Calu3 (cell line): ENCODE measurements at regions of chr22 and their contacts with region 1.

Region 1: DNA sequence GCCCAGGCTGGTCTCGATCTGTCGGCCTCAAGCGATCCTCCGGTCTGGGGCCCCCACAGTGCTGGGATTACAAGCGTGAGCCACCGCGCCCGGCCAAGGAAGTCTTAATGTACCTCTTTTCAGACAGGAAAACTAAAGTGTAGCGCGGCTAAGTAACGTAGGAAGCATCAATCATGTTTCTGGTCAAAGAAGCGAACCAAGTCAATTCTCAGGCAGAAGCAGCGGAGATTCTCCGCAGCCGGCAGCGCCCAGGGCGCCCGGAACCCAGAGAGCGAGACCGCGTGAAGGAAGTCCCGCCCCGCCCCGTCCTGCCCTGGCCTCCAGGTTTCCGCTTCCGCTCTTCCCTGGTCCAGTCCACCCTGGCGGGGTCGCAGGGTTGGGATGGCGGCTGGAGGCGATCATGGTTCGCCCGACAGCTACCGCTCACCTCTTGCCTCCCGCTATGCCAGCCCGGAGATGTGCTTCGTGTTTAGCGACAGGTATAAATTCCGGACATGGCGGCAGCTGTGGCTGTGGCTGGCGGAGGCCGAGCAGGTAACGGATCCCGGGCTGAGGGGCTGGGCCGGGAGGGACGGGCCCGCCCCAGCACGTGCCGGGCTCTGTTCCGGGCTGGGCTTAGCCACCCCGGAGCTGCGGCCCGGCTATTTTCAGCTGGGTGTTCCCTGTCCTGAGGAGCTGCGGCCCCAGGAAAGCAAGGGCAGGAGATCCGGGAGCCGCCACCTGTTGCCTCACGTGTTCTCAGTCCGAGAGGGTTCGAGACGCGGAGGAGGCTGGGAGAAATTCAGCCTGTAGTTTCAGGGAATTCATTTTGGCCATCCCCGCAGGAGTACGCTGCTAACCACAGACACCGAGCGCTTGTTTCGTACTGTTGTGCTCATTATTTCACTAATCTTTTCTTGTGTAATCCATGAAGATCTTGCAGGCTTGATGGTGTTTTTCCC is at the start of gene ADSL:
- DNase-seq: peak; percentile 93
- H3K4me3 Mint-ChIP-seq: peak within 1 kb of the TSS; percentile 88
- H3K27ac Mint-ChIP-seq: peak within 1 kb of the TSS; percentile 92
- H3K4me1 Mint-ChIP-seq: peaks cover 27% of the 10 kb centered on the region
- H3K27me3 Mint-ChIP-seq: no peaks in the 10 kb centered on the region
- CTCF ChIP-seq: no peak
- total RNA-seq, gene ADSL: 89.0 and 96.3 TPM in 2 replicates

Region 2: GRCh38 chr22:40044102-40044869 is 302.2 kb before region 1 on chr22:
- CTCF ChIA-PET with region 1: interaction called, 4 read pairs
- intact Hi-C with region 1: loop called (anchors 2 kb)
- DNase-seq: peak; percentile 97
- H3K4me3 Mint-ChIP-seq: peak overlapping the region; percentile 83
- H3K27ac Mint-ChIP-seq: peak overlapping the region; percentile 99
- H3K4me1 Mint-ChIP-seq: peaks cover 8% of the 10 kb centered on the region
- H3K27me3 Mint-ChIP-seq: peaks cover 11% of the 10 kb centered on the region
- CTCF ChIP-seq: no peak

Region 3: GRCh38 chr22:40156001-40156516 is 190.4 kb before region 1 on chr22:
- CTCF ChIA-PET with region 1: no interaction called
- intact Hi-C with region 1: loop called (anchors 5 kb)
- DNase-seq: peak; percentile 64
- H3K4me3 Mint-ChIP-seq: peak overlapping the region; percentile 37
- H3K27ac Mint-ChIP-seq: peak overlapping the region; percentile 42
- H3K4me1 Mint-ChIP-seq: peaks cover 16% of the 10 kb centered on the region
- H3K27me3 Mint-ChIP-seq: no peaks in the 10 kb centered on the region
- CTCF ChIP-seq: peak; percentile 19

Region 4: GRCh38 chr22:40238425-40239344 is 107.8 kb before region 1 on chr22:
- CTCF ChIA-PET with region 1: no interaction called
- intact Hi-C with region 1: no loop called
- DNase-seq: peak; percentile 51
- H3K4me3 Mint-ChIP-seq: peak overlapping the region; percentile 59
- H3K27ac Mint-ChIP-seq: peak overlapping the region; percentile 67
- H3K4me1 Mint-ChIP-seq: peaks cover 66% of the 10 kb centered on the region
- H3K27me3 Mint-ChIP-seq: no peaks in the 10 kb centered on the region
- CTCF ChIP-seq: no peak

Region 5: DNA sequence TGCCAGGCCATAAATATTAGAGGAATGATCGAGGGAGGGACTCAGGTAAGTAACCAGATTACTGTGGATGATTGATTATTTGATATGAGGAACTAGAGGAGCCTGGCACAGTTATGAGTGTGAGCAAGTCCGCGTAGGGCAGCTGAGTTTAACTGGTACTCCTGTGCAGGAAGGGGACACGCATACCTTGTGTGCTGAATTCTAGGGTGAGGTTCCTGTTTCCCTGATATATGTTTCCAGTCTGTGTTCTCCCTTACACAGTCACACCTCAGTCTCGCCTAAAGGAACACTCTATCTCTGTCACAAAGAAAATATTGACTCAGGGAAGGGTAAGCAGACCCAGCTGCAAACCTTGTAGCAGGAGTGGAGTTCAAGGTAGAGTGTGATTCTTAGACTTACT is 41.3 kb after region 1 on chr22:
- CTCF ChIA-PET with region 1: no interaction called
- intact Hi-C with region 1: no loop called
- DNase-seq: peak; percentile 47
- H3K4me3 Mint-ChIP-seq: peak overlapping the region; percentile 1
- H3K27ac Mint-ChIP-seq: peak overlapping the region; percentile 50
- H3K4me1 Mint-ChIP-seq: peaks cover 36% of the 10 kb centered on the region
- H3K27me3 Mint-ChIP-seq: no peaks in the 10 kb centered on the region
- CTCF ChIP-seq: no peak

Region 6: GRCh38 chr22:40493441-40493840 is 147.0 kb after region 1 on chr22:
- CTCF ChIA-PET with region 1: interaction called, 11 read pairs
- intact Hi-C with region 1: no loop called
- DNase-seq: no peak
- H3K4me3 Mint-ChIP-seq: no peak overlapping the region
- H3K27ac Mint-ChIP-seq: no peak overlapping the region
- H3K4me1 Mint-ChIP-seq: peaks cover 39% of the 10 kb centered on the region
- H3K27me3 Mint-ChIP-seq: no peaks in the 10 kb centered on the region
- CTCF ChIP-seq: no peak